Activated T-helper 1 cell treated with anti-CD3 and anti-CD28 coated beads, Interleukin-12 subunit alpha, Interleukin-12 subunit beta, Interleukin-2, Interleukin-4 antibody, amounts not matched to agents 30 ng/mL and 10 ng/mL and 1 ng/mL, durations not matched to agents 14 hours and 24 hours and 36 hours (primary cell): ENCODE measurements at regions of chr16 and their contacts with region 1.

Region 1: GRCh38 chr16:87393680-87394055 is 1.5 kb downstream of the MAP1LC3B start:
- DNase-seq: no peak
- H3K4me3 Mint-ChIP-seq: peak overlapping the region; percentile 92
- H3K27ac Mint-ChIP-seq: peak overlapping the region; percentile 87
- H3K4me1 Mint-ChIP-seq: peaks cover 34% of the 10 kb centered on the region
- H3K27me3 Mint-ChIP-seq: no peaks in the 10 kb centered on the region

Region 2: DNA sequence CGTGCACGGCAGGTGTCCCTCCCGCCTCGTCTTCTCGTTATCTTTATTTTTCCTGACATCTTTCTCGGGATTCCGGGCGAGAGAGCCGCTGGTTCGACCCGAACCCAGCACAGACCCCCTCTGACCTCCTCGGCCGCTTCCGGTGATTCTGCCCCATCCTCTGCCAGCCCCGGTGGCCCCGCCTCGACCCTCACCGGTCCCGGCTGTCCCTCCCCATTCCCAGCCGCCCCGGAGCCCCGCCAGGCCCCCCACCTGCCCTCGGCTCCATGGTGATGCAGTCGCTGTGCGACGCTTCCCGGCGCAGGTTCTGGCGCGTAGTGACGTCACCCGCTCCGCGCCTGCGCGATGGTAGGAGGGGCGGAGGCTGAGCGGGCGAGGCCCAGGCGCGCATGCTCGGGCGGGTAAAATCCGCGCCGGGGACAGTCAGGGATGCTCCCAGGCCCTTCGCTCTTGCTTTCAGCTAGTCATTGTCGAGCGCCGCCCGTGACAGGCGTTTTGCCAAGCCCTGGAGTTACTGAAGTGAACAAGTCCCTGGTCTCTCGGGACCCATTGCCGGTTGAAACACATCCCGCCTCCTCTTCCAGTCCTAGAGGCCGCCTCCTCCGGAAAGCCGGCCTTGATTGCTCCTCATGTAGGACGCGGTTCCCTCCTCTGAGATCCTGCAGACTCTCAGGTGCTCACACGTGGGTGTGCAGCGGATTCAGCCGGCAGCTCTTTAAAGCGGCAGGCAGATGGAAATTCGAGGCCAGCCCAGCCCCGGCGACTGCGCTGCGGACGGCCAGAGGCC is 838.6 kb before region 1 on chr16 and contains the start of gene MTHFSD:
- intact Hi-C with region 1: loop called (anchors 2 kb)
- DNase-seq: peak; percentile 94
- H3K4me3 Mint-ChIP-seq: peak within 1 kb of the TSS; percentile 86
- H3K27ac Mint-ChIP-seq: peak within 1 kb of the TSS; percentile 95
- H3K4me1 Mint-ChIP-seq: peaks cover 20% of the 10 kb centered on the region
- H3K27me3 Mint-ChIP-seq: peaks cover 5% of the 10 kb centered on the region
- total RNA-seq, gene MTHFSD: 30.6 and 31.8 TPM in 2 replicates

Region 3: GRCh38 chr16:87363771-87364455 is 29.8 kb before region 1 on chr16:
- intact Hi-C with region 1: no loop called
- DNase-seq: no peak
- H3K4me3 Mint-ChIP-seq: no peak overlapping the region
- H3K27ac Mint-ChIP-seq: peak overlapping the region; percentile 55
- H3K4me1 Mint-ChIP-seq: peaks cover 42% of the 10 kb centered on the region
- H3K27me3 Mint-ChIP-seq: no peaks in the 10 kb centered on the region

Region 4: GRCh38 chr16:87380859-87381258 is 12.8 kb before region 1 on chr16:
- intact Hi-C with region 1: loop called (anchors 1 kb)
- DNase-seq: no peak
- H3K4me3 Mint-ChIP-seq: peak overlapping the region; percentile 89
- H3K27ac Mint-ChIP-seq: peak overlapping the region; percentile 91
- H3K4me1 Mint-ChIP-seq: peaks cover 36% of the 10 kb centered on the region
- H3K27me3 Mint-ChIP-seq: peaks cover 2% of the 10 kb centered on the region

Region 5: GRCh38 chr16:87636072-87636684 is 242.5 kb after region 1 on chr16:
- intact Hi-C with region 1: loop called (anchors 1 kb)
- DNase-seq: peak; percentile 52
- H3K4me3 Mint-ChIP-seq: peak overlapping the region; percentile 45
- H3K27ac Mint-ChIP-seq: no peak overlapping the region
- H3K4me1 Mint-ChIP-seq: no peaks in the 10 kb centered on the region
- H3K27me3 Mint-ChIP-seq: peaks cover 11% of the 10 kb centered on the region